ENCODE measurements at regions of chr5 and their contacts with region 1.

Region 1: GRCh38 chr5:134184155-134185135 is 7.7 kb upstream of the SKP1 start:
- DNase-seq: peak; percentile 85
- H3K4me3 Mint-ChIP-seq: no peak overlapping the region
- H3K27ac Mint-ChIP-seq: no peak overlapping the region
- H3K4me1 Mint-ChIP-seq: no peaks in the 10 kb centered on the region
- H3K27me3 Mint-ChIP-seq: peaks cover 22% of the 10 kb centered on the region

Region 2: GRCh38 chr5:134092878-134093277 is 91.6 kb before region 1 on chr5:
- CTCF ChIA-PET with region 1: no interaction called
- DNase-seq: no peak
- H3K4me3 Mint-ChIP-seq: no peak overlapping the region
- H3K27ac Mint-ChIP-seq: peak overlapping the region; percentile 74
- H3K4me1 Mint-ChIP-seq: peaks cover 79% of the 10 kb centered on the region
- H3K27me3 Mint-ChIP-seq: peaks cover 36% of the 10 kb centered on the region

Region 3: GRCh38 chr5:134204575-134204974 is 20.1 kb after region 1 on chr5:
- CTCF ChIA-PET with region 1: interaction called, 11 read pairs
- DNase-seq: no peak
- H3K4me3 Mint-ChIP-seq: no peak overlapping the region
- H3K27ac Mint-ChIP-seq: no peak overlapping the region
- H3K4me1 Mint-ChIP-seq: peaks cover 8% of the 10 kb centered on the region
- H3K27me3 Mint-ChIP-seq: no peaks in the 10 kb centered on the region

Region 4: DNA sequence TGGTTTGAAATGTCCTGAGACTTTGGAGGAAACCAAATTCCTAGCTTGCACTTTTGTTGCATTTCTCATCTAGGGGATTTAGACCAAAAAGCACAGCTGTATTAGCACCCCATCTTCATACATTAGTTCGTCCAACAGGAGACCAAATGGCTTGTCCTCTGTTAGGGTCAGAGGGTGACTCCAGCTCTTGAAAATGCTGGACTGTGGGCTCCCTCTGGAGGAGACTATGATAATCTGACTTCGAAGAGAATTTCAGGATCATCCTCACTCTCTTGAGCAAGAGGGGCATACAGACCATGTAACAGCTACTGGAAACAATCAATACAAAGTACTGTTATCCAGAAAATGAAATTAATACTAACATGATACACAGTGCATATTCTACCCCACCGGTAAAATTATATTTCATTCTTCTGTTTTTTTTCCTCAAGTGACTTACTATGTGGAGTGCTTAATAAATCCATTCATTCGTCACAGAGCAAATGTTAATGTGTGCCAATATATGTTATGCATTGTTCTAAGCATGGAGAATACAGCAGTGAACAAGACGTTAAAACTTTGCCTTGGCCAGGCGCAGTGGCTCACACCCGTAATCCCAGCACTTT is 105.2 kb after region 1 on chr5:
- CTCF ChIA-PET with region 1: interaction called, 84 read pairs
- DNase-seq: peak; percentile 50
- H3K4me3 Mint-ChIP-seq: no peak overlapping the region
- H3K27ac Mint-ChIP-seq: no peak overlapping the region
- H3K4me1 Mint-ChIP-seq: no peaks in the 10 kb centered on the region
- H3K27me3 Mint-ChIP-seq: peaks cover 49% of the 10 kb centered on the region